ENCODE measurements at regions of chr5 and their contacts with region 1.

Region 1: DNA sequence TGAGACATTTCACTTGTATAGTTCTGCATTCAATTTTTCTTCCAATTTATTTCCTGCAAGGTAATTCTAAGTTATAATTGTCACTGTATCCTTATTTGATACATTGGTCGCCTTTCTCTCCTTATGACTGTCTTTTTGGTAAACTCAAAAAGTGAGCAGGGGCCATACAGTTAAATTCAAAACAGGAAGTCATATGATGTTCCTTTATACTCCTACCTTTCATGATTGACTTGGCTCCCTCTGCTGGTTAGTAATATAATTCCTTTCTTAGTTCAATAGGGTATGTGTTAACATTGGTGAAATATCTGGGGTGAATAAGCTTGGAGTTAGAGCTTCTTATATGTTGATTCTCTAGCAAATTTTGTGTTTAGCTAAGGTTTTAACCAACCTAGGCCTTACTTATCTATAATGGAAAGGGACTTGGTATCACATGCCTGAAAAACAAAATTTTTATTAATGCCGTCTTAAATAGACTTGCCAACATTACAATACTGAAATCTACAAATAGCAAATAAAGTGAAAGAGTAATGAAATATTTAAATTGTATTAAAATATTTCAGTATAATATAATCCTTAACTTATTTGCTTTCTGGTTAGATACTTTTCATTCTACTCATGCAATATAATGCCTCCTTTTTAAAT is 6.0 kb upstream of the NIPBL start:
- DNase-seq: no peak
- ATAC-seq: peak; percentile 82
- H3K4me3 Mint-ChIP-seq: no peak overlapping the region
- H3K27ac Mint-ChIP-seq: peak overlapping the region; percentile 28
- H3K4me1 Mint-ChIP-seq: peaks cover 27% of the 10 kb centered on the region
- H3K27me3 Mint-ChIP-seq: no peaks in the 10 kb centered on the region

Region 2: DNA sequence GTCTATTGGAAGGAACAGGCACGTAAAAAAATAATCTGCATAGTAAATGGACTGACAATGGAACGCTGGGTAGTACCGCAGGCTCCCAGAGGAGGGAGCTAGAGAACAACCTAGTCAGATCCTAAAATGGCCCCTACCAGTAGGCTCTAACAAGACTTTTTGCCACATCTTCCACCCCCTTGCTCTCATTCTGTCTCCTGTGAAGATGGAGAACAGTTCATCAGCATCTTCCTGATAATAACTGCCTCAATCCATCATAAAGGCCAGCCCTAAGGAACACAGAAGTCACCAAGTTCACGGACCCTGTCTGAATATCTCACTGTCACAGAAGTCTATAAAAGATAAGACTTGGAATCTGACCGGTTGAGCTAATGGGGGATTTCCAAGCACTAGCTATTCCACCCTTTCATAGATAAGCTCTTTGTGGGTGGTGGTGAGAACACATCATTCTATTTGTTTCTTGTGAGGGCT is 130.7 kb before region 1 on chr5:
- CTCF ChIA-PET with region 1: interaction called, 14 read pairs
- POLR2A ChIA-PET with region 1: no interaction called
- intact Hi-C with region 1: loop called (anchors 1 kb)
- DNase-seq: peak; percentile 86
- ATAC-seq: peak; percentile 85
- H3K4me3 Mint-ChIP-seq: no peak overlapping the region
- H3K27ac Mint-ChIP-seq: no peak overlapping the region
- H3K4me1 Mint-ChIP-seq: peaks cover 8% of the 10 kb centered on the region
- H3K27me3 Mint-ChIP-seq: peaks cover 31% of the 10 kb centered on the region

Region 3: GRCh38 chr5:36744773-36745589 is 125.5 kb before region 1 on chr5:
- CTCF ChIA-PET with region 1: interaction called, 14 read pairs
- POLR2A ChIA-PET with region 1: no interaction called
- intact Hi-C with region 1: loop called in 1 of 2 experiments (anchors 1 kb)
- DNase-seq: peak; percentile 57
- ATAC-seq: peak; percentile 63
- H3K4me3 Mint-ChIP-seq: peak overlapping the region; percentile 72
- H3K27ac Mint-ChIP-seq: peak overlapping the region; percentile 4
- H3K4me1 Mint-ChIP-seq: peaks cover 10% of the 10 kb centered on the region
- H3K27me3 Mint-ChIP-seq: peaks cover 48% of the 10 kb centered on the region